GM18951 (cell line): ENCODE measurements at regions of chr9 and their contacts with region 1.

Region 1: GRCh38 chr9:4382722-4383317 is 83.0 kb upstream of the GLIS3 start:
- POLR2A ChIP-seq: no peak

Region 2: GRCh38 chr9:4630836-4631235 is 248.0 kb after region 1 on chr9:
- in situ Hi-C with region 1: loop called (anchors 10 kb)
- POLR2A ChIP-seq: no peak